Dendritic cell treated with granulocyte-macrophage colony-stimulating factor and Interleukin-4, amounts not matched to agents 40 ng/mL and 50 ng/mL, for 4 days (primary cell): ENCODE measurements at regions of chr7 and their contacts with region 1.

Region 1: GRCh38 chr7:75945297-75946168 is 30.6 kb downstream of the POR start:
- H3K4me3 Mint-ChIP-seq: no peak overlapping the region
- H3K27ac Mint-ChIP-seq: no peak overlapping the region
- H3K4me1 Mint-ChIP-seq: peaks cover 54% of the 10 kb centered on the region
- H3K27me3 Mint-ChIP-seq: no peaks in the 10 kb centered on the region

Region 2: GRCh38 chr7:75989500-75990388 is 44.2 kb after region 1 on chr7:
- intact Hi-C with region 1: no loop called
- H3K4me3 Mint-ChIP-seq: no peak overlapping the region
- H3K27ac Mint-ChIP-seq: peak overlapping the region; percentile 23
- H3K4me1 Mint-ChIP-seq: peaks cover 34% of the 10 kb centered on the region
- H3K27me3 Mint-ChIP-seq: no peaks in the 10 kb centered on the region

Region 3: DNA sequence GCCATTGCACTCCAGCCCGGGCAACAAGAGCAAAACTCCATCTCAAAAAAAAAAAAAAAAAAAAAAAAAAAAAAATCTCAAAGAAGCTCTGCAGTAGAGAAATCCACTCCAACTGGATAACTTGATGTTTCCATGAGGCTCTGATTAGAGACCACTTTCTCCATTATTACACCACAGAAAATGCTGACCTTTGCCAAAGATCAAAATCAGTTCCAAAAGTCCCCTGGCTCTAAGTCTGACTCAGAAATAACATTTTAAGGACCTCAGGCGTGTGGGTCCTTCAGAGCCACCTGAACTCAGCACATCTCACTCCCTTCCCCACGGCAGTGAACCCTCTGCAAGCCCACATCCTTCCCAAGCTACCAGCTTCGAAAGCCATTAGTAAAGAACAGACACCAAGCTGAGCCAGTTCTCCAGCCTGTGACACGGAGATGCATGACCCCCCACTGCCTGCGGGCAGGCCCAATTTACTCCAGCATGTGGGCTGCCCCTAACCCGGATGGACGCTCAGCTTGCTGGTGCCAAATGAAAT is 62.7 kb after region 1 on chr7:
- intact Hi-C with region 1: loop called (anchors 10 kb)
- H3K4me3 Mint-ChIP-seq: no peak overlapping the region
- H3K27ac Mint-ChIP-seq: peak overlapping the region; percentile 58
- H3K4me1 Mint-ChIP-seq: peaks cover 39% of the 10 kb centered on the region
- H3K27me3 Mint-ChIP-seq: no peaks in the 10 kb centered on the region